ENCODE measurements at regions of chr18 and their contacts with region 1.

Region 1: GRCh38 chr18:2662990-2663389 is 7.5 kb downstream of the SMCHD1 start:
- DNase-seq: no peak
- ATAC-seq: peak; percentile 38
- H3K4me3 ChIP-seq: no peak overlapping the region
- H3K4me3 Mint-ChIP-seq: peak overlapping the region; percentile 33 to 86 (median 68)
- H3K27ac ChIP-seq: no peak overlapping the region
- H3K27ac Mint-ChIP-seq: peak overlapping the region in 7 of 9 donors; percentile 34 to 83 (median 44)
- H3K4me1 ChIP-seq: peaks cover 34 to 44% of the 10 kb centered on the region in 2 donors
- H3K4me1 Mint-ChIP-seq: peaks cover 54 to 88% (median 81%) of the 10 kb centered on the region in 7 donors
- H3K27me3 ChIP-seq: no peaks in the 10 kb centered on the region
- H3K27me3 Mint-ChIP-seq: no peaks in the 10 kb centered on the region

Region 2: DNA sequence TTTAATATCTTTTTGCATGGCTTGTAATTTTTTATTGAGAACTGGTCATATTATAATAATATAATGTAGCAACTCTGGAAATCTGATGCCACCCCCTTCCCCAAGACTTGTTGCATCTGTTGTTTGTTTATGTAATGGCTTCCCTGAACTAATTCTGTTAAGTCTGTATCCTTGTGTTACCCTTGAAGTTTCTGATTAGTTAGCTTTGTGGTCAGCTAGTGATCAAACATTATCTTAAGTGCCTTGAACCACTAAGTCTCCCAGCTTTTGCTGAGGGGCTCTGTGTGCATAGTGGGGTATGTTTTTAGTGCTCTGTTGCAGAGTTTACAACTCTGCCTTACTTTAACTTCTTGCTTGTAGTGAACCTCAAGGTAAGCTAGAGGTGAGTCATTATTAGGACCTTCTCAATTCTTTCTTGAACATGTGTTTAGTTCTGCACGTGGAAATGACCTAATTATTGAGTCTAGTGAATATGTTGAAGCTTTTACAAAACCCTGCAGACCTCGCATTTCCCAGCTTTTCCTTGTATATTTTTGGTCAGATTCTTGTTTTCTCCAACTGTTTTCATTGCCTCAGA is 17.3 kb after region 1 on chr18:
- CTCF ChIA-PET with region 1: interaction called, 4 read pairs
- POLR2A ChIA-PET with region 1: interaction called, 31 read pairs
- intact Hi-C with region 1: loop called (anchors 2 kb)
- DNase-seq: no peak
- ATAC-seq: no peak
- H3K4me3 ChIP-seq: no peak overlapping the region
- H3K4me3 Mint-ChIP-seq: peak overlapping the region in 4 of 10 donors; percentile 7 to 55 (median 36)
- H3K27ac ChIP-seq: no peak overlapping the region
- H3K27ac Mint-ChIP-seq: peak overlapping the region in 8 of 9 donors; percentile 13 to 75 (median 63)
- H3K4me1 ChIP-seq: peaks cover 22 to 23% of the 10 kb centered on the region in 2 donors
- H3K4me1 Mint-ChIP-seq: peaks cover 40 to 89% (median 77%) of the 10 kb centered on the region in 7 donors
- H3K27me3 ChIP-seq: no peaks in the 10 kb centered on the region
- H3K27me3 Mint-ChIP-seq: no peaks in the 10 kb centered on the region

Region 3: DNA sequence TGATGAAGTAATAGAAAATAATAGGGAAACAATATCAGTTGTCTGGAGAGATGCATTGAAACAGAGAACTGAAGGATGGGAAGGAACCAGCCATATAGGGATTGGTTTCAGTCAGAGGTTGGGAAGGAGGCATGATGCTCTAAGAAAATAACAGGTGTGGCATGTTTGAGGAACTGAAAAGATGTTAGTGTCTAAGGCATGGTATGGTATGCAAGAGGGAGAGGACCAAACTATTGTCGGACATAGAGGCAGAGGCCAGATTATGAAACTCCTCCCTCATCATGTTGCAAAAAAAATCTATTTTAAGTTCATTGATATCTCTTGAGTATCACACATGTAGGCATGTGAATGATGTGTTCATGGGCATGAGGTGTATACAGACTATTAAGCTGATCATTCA is 135.0 kb after region 1 on chr18:
- CTCF ChIA-PET with region 1: no interaction called
- POLR2A ChIA-PET with region 1: no interaction called
- intact Hi-C with region 1: no loop called
- DNase-seq: no peak
- ATAC-seq: no peak
- H3K4me3 ChIP-seq: no peak overlapping the region
- H3K4me3 Mint-ChIP-seq: no peak overlapping the region
- H3K27ac ChIP-seq: no peak overlapping the region
- H3K27ac Mint-ChIP-seq: peak overlapping the region in 3 of 9 donors; percentile 6 to 48 (median 41)
- H3K4me1 ChIP-seq: no peaks in the 10 kb centered on the region
- H3K4me1 Mint-ChIP-seq: peaks cover 3 to 21% (median 9%) of the 10 kb centered on the region in 7 donors
- H3K27me3 ChIP-seq: no peaks in the 10 kb centered on the region
- H3K27me3 Mint-ChIP-seq: no peaks in the 10 kb centered on the region